HepG2 (cell line): ENCODE measurements at regions of chr1 and their contacts with region 1.

Region 1: DNA sequence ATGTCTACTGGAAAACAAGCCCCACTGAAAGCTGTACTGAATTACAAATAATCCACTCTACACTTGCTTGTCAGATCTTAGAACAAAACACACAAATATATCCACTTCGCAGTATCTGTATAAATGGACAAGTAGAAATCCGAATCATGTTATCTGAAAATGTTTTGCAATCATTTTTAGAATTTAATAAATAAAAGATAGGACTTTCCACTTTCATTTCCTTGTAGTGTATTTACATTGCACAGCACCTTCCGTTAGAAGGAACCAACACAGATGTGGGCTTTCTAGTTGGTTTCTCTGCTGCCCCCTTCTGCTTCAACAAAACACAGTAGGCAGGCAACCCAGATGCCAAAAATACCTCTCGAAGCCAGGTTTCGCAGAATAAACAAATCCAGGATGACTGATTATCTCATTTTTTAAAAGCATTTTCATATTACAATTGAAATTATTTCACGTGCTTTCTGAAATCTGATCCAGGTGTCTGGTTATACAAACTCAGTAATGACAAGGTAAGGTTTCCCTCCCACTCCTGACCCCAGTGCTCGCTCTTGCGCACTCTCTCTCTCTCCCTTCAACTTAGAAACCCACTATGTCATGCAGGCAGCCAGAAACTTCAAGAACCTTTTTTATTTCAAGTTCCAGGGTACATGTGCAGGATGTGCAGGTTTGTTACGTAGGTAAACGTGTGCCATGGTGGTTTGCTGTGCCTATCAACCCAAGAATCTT is 389.9 kb downstream of the SMYD3 start:
- DNase-seq: peak; percentile 8
- ATAC-seq: peak; percentile 86
- H3K4me3 ChIP-seq: no peak overlapping the region
- H3K27ac ChIP-seq: no peak overlapping the region
- H3K4me1 ChIP-seq: peaks cover 3% of the 10 kb centered on the region
- H3K27me3 ChIP-seq: no peaks in the 10 kb centered on the region
- CTCF ChIP-seq: peak; percentile 60
- EP300 ChIP-seq: no peak
- POLR2A ChIP-seq: no peak
- RAD21 ChIP-seq: no peak

Region 2: DNA sequence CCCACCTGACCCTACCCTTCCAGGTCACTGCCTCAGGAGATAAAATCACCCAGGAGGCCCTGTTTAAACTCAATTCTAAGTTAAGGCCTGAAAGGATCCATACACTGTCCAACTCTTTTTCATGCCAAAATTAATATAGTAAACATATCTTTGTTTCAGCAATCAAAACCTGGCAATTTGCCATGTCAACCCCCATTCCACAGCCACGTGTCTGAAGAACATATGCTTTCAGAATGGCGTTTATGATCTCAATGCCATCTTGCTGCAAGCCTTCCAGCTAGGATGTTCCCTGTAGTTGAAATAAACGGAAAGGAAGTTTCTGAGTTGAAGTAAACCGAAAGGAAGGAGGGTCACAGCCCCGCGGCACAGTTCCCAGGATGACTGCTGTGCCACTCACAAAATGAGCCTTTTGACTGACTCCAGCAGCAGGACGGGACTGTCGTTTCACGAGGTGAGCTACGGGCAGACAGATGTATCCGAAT is 82.1 kb before region 1 on chr1:
- CTCF ChIA-PET with region 1: no interaction called
- POLR2A ChIA-PET with region 1: no interaction called
- in situ Hi-C with region 1: no loop called
- intact Hi-C with region 1: no loop called
- DNase-seq: no peak
- ATAC-seq: no peak
- H3K4me3 ChIP-seq: no peak overlapping the region
- H3K27ac ChIP-seq: no peak overlapping the region
- H3K4me1 ChIP-seq: peaks cover 14% of the 10 kb centered on the region
- H3K27me3 ChIP-seq: no peaks in the 10 kb centered on the region
- CTCF ChIP-seq: no peak
- EP300 ChIP-seq: no peak
- POLR2A ChIP-seq: no peak
- RAD21 ChIP-seq: no peak

Region 3: GRCh38 chr1:246051909-246052516 is 65.2 kb before region 1 on chr1:
- CTCF ChIA-PET with region 1: no interaction called
- POLR2A ChIA-PET with region 1: no interaction called
- in situ Hi-C with region 1: no loop called
- intact Hi-C with region 1: no loop called
- DNase-seq: no peak
- ATAC-seq: no peak
- H3K4me3 ChIP-seq: no peak overlapping the region
- H3K27ac ChIP-seq: no peak overlapping the region
- H3K4me1 ChIP-seq: no peaks in the 10 kb centered on the region
- H3K27me3 ChIP-seq: no peaks in the 10 kb centered on the region
- CTCF ChIP-seq: no peak
- EP300 ChIP-seq: no peak
- POLR2A ChIP-seq: no peak
- RAD21 ChIP-seq: no peak

Region 4: DNA sequence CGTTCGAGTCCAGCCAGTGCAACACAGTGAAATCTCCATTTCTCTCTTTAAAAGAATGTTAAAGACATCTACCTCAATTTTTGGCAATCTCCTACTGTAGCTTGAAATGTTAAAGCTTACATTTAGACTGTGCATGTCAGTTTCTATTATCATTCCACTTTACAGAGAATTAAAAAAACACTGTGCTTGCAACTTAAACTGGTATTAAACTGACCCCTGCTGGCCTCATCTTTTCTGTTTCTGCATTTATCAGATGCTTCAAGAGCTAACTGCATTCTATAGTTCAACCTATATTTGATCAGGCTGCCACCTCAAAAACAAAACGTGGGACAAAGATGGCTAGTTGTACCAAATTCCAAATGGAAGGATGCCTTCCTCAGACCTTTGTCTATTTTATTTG is 163.3 kb after region 1 on chr1:
- CTCF ChIA-PET with region 1: no interaction called
- POLR2A ChIA-PET with region 1: no interaction called
- in situ Hi-C with region 1: no loop called
- intact Hi-C with region 1: loop called (anchors 2 kb)
- DNase-seq: peak; percentile 12
- ATAC-seq: peak; percentile 41; the same call in 1 of the 3 replicates
- H3K4me3 ChIP-seq: no peak overlapping the region
- H3K27ac ChIP-seq: no peak overlapping the region
- H3K4me1 ChIP-seq: peaks cover 14% of the 10 kb centered on the region
- H3K27me3 ChIP-seq: no peaks in the 10 kb centered on the region
- CTCF ChIP-seq: peak; percentile 43
- EP300 ChIP-seq: no peak
- POLR2A ChIP-seq: no peak
- RAD21 ChIP-seq: no peak